Tibial artery (tissue), 4 donors: ENCODE measurements at regions of chr4 and their contacts with region 1.

Region 1: DNA sequence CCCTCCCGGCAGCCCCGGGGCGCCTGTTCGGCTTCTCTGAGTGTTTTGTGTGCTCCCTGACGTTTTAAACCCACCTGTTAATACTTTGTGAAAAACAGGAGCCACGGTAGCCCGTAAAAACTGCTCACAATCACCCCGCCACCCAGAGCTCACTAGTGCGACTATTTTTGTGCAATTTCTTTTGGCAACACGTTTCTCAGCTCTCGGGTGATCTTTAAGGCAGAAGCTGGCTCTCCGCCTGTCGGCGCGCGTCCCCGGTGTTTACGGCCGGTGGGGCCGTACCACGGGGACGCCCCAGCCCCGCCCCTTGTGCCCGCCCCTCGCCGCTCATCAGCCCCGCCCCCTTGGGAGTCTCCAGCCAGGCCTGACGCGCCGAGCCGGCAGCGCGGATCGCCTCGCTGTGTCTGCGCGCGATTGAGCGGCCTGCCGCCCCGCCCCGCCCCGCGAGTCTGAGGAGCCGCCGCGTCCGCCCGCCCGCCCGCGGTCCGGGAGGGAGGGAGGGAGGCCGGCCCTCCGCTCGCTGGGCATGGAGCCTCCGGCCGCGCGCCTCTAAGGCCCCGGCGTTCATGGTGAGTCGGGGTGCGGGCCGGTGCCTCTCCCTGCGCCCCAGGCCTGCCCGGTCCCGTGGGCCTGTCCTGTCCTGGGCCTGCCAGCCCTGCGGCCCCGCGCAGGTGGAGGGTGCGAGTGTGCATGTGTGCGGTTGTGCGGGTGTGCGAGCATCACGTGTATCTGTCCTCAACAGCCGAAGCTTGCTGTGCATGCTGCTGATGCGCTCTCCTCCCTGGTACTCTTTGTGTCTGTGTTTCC is 56.2 kb upstream of the TADA2B start:
- DNase-seq: peak; percentile 93 to 98
- H3K4me3 ChIP-seq: peak overlapping the region; percentile 69 to 84
- H3K27ac ChIP-seq: peak overlapping the region; percentile 96 to 98
- H3K4me1 ChIP-seq: peaks cover 0 to 54% (median 41%) of the 10 kb centered on the region in 4 donors
- H3K27me3 ChIP-seq: no peaks in the 10 kb centered on the region
- CTCF ChIP-seq: peak in 1 of 2 experiments; percentile 12

Region 2: DNA sequence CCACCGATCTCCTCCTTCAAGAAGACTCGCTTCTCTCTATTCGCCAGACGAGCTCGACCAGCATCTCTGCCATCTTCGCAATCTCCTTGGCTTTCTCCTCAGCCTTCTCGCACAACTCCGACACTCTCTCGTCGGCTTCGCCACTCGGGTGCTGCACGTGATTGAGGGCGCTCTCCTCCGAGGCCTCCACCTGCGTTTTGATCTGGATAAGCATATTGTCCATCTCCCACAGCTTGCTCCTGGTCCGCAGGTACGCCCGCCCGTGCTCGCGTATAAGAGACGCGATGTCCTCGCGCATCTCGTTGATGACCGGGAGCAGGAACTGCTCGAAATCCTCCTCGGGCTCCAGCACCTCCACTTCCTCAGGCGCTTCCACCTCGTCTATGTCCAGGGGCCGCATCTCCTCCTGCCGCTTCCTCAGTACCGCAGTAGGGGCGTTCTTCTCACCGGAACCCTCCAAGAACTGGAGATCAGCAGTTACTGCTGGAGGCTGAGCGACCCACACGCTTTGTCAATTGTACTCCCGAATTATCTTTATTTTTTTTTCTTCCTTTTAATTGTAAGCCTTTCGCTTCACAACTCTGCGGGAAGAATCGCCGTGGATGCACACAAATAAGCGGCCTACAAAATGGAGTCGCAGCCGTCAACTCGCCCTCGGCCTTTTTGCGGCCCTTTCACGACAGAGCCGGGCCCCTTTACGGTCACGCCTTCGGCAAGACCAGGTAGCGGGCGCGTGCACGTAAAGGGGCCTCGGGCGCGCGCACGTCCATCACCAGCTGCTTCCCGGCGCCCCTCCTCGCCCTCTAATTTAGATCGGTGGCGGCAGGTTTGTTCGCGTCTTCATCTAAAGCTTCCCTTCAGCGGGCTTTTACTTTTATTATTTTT is 277.5 kb before region 1 on chr4 and contains the start of gene MRFAP1L1:
- intact Hi-C with region 1: loop called (anchors 10 kb)
- DNase-seq: peak; percentile 96 to 98
- H3K4me3 ChIP-seq: peak within 1 kb of the TSS; percentile 75 to 88
- H3K27ac ChIP-seq: peak within 1 kb of the TSS; percentile 82 to 85
- H3K4me1 ChIP-seq: peaks cover 5 to 40% (median 24%) of the 10 kb centered on the region in 4 donors
- H3K27me3 ChIP-seq: no peaks in the 10 kb centered on the region
- CTCF ChIP-seq: peak in 1 of 2 experiments; percentile 9

Region 3: DNA sequence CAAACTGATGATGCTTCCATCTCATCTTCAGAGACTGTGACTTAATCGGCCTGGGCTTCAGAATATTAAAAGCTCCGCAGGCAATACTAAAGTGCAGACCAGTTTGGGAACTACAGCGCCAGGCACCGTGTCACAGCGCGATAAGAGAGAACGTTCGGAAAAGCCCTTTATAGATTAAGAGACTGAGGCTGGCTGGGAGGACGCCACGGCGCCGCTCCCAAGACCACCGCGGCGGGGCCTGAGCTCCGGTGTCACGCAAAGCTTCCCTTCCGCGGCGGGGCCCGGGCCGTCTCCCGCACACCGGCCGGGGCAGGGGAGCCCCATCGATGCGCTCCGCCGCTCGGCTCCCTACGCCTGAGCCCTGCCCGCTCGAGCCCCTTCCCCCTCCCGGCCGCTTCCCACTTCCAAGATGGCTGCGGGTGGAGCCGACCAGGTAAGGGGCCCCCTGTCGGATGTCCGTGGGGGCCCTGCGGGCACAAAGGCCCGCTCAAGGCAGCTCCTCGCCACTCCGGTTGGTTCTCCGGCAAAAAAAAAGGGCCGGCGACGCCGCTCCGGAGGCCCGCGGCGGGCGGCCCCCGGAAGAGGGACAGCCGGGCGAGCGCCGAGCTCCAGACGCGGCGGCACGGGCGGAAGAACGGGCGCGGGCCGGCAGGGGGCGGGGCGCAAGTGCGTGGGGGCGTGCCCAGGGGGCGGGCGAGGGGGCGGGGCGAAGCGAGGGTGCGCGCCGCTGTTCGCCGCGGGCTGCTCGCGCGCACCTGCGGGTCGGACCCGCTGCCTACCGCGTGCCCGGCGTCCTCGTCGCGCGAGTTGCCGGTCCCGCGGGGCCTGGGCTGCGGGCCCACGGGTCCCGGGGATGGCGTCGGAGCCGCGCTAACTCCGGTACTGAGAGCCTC is 77.7 kb before region 1 on chr4 and contains the start of gene TBC1D14:
- intact Hi-C with region 1: loop called (anchors 2 kb)
- DNase-seq: peak; percentile 86 to 94
- H3K4me3 ChIP-seq: peak within 1 kb of the TSS; percentile 70 to 91
- H3K27ac ChIP-seq: peak within 1 kb of the TSS; percentile 93 to 100
- H3K4me1 ChIP-seq: peaks cover 0 to 39% (median 27%) of the 10 kb centered on the region in 4 donors
- H3K27me3 ChIP-seq: peaks cover 0 to 16% of the 10 kb centered on the region in 2 donors
- CTCF ChIP-seq: peak in 1 of 2 experiments; percentile 35

Region 4: DNA sequence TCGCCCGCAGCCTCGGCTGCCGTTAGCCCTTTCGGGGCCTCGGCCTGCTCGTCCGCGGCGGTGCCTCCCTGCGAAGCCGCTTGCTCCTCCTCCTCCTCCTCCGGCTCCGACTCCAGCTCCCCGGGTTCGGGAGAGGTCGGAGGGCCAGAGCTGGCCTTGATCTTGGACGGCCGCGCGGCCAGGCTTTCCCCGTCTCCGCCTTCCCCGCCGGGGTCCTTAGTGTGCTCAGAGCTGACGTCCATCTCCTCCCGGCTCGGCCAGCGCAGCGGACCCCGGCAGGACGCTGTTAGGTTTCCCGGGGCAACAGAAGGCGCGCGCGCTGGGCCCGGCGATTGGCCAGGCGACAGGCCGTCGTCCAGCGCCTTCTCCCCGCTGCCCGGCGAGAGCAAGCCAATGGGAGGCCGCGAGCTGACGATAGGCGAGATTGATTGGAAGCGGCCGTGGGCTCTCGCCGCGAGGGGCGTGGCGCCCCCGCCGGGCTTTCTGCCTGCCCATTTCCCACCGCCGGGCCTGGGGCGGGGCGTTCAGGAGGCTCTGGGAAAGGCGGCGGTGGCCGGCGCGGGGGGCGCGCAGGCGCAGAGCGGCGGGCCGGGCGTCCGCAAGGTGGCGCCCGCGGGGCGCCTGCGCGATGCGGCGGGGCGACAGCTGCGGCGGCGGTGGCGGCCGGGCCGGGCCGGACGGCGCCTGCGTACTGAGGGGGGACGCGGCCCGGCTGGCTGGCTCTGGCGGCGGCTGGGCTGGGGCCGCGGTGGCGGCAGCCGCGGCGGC is 55.9 kb after region 1 on chr4 and contains the start of gene TADA2B:
- intact Hi-C with region 1: loop called (anchors 5 kb)
- DNase-seq: peak; percentile 96 to 99
- H3K4me3 ChIP-seq: peak within 1 kb of the TSS; percentile 96 to 100
- H3K27ac ChIP-seq: peak within 1 kb of the TSS; percentile 90 to 99
- H3K4me1 ChIP-seq: peaks cover 0 to 50% (median 41%) of the 10 kb centered on the region in 4 donors
- H3K27me3 ChIP-seq: no peaks in the 10 kb centered on the region
- CTCF ChIP-seq: peak; percentile 19 to 79

Region 5: DNA sequence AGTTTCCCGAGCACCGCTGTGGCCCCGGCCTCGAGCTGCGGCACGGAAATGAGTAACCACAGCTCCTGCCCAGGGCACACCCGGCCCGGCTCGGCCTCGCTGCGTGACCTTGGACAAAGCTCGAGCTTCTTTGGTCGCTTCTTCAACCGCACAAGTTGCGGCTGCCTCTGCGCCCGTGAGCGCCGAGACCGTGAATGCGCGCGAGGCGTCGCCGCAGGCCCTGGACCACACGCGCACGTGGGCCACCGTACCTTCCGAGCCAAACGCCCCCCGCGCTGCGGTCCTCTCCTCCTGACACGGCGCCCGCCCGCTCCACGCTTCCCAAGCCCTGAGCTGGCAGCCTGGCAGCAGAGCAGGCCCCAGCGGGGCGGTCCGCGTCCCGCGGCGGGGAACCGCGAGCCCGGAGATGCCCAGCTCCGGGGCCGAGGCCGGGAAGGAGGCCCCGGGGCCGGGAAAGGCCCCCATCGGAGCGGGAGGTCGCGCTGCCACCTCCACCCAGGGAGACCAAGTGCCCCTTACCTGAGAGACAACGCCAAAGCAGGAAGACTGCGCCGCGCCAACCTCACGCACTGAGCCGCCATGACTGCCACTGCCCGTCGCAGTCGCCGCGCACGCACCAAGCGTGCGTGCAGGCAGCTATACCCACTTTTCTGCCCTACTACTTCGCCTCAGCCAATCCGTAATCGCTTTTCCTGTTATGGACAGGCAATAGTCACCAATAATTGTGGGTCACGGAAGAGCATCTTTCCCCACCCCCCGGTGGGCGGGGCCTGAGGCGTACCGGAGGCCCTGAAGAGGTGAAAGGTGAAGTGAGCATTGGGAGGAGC is 80.7 kb after region 1 on chr4 and contains the start of gene GRPEL1:
- intact Hi-C with region 1: loop called (anchors 2 kb)
- DNase-seq: peak; percentile 100
- H3K4me3 ChIP-seq: peak within 1 kb of the TSS; percentile 67 to 90
- H3K27ac ChIP-seq: peak within 1 kb of the TSS; percentile 87 to 95
- H3K4me1 ChIP-seq: peaks cover 0 to 30% (median 23%) of the 10 kb centered on the region in 4 donors
- H3K27me3 ChIP-seq: no peaks in the 10 kb centered on the region
- CTCF ChIP-seq: no peak

Region 6: DNA sequence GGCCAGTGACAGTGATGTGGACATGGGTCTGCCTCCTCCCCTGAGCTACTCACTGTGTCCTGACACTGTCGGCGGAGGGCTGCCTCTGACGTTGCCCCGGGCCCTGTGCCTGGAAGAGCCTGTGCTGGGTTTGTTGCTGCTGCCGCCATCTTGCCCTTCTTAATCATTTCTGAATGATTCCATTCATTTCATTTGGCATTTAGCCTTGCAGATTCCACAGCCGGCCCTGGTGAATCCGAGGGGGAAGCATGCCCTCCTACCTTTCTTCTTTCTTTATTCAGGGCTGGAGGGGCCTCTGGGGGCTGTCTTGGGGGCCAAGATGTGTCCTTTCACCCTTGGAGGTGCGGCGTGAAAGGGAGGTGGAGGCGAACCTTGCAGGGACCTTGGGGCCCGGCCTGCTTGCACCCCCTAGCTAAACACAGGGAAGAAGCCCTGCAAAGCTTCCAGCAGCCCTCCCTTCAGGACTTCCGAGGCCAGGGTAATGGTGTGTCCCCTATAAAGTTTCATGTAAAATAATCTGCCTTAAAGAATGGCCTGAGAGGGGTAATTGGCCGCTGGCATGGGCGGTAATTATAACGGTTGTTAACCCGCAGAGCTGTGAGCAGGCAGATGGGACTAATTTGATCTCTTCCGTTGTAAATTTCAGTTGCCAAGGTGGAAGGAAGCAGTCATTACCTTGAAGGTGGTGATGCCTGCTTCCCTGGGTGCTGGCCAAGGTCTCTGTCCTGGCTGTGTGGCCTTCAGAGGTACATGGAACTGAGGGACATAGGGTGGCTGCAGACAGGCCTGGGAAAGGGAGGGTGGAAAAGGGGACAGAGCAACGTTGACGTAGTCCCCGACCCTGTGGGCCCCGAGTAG is 355.5 kb after region 1 on chr4:
- intact Hi-C with region 1: no loop called
- DNase-seq: no peak
- H3K4me3 ChIP-seq: no peak overlapping the region
- H3K27ac ChIP-seq: no peak overlapping the region
- H3K4me1 ChIP-seq: no peaks in the 10 kb centered on the region
- H3K27me3 ChIP-seq: no peaks in the 10 kb centered on the region
- CTCF ChIP-seq: no peak